Endothelial cell of umbilical vein (primary cell): ENCODE measurements at regions of chr13 and their contacts with region 1.

Region 1: GRCh38 chr13:39051157-39051556 is 12.9 kb downstream of the NHLRC3 start:
- DNase-seq: peak; percentile 57
- H3K4me3 ChIP-seq: no peak overlapping the region
- H3K27ac ChIP-seq: no peak overlapping the region
- H3K4me1 ChIP-seq: no peaks in the 10 kb centered on the region
- H3K27me3 ChIP-seq: no peaks in the 10 kb centered on the region
- CTCF ChIP-seq: peak; percentile 18 to 31
- POLR2A ChIP-seq: no peak

Region 2: GRCh38 chr13:39037880-39038568 is 13.1 kb before region 1 on chr13 and contains the starts of genes NHLRC3 and PROSER1:
- CTCF ChIA-PET with region 1: interaction called, 15 read pairs
- POLR2A ChIA-PET with region 1: no interaction called
- dilution Hi-C with region 1: no loop called
- intact Hi-C with region 1: no loop called
- DNase-seq: peak; percentile 89
- H3K4me3 ChIP-seq: peak within 1 kb of the TSS; percentile 75 to 98 (median 94)
- H3K27ac ChIP-seq: peak within 1 kb of the TSS; percentile 86
- H3K4me1 ChIP-seq: peaks cover 24% of the 10 kb centered on the region
- H3K27me3 ChIP-seq: no peaks in the 10 kb centered on the region
- CTCF ChIP-seq: no peak
- POLR2A ChIP-seq: peak; percentile 45
- total RNA-seq, gene NHLRC3: 10.2 and 11.9 TPM in 2 replicates
- total RNA-seq, gene PROSER1: 40.4 and 44.1 TPM in 2 replicates

Region 3: DNA sequence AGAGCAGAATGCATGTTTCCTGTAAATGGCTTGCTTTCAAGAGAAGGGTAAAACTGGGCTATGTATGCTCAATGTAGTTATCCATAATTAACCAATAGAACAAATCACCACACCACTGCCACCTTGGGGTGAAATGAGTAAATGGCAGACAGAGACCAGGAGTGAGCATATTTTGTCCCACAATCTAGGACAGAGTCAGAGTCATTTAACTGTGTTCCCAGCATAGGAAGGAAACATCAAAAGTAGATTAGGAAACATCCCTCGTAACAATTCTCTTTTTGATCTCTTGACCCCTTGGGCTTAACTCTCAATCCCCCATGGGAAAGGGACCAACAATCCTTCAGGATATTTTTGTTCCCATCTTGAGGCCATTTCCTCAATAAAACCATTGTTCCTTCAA is 211.9 kb after region 1 on chr13:
- CTCF ChIA-PET with region 1: interaction called, 20 read pairs
- POLR2A ChIA-PET with region 1: no interaction called
- dilution Hi-C with region 1: no loop called
- intact Hi-C with region 1: loop called (anchors 1 kb)
- DNase-seq: peak; percentile 71
- H3K4me3 ChIP-seq: no peak overlapping the region
- H3K27ac ChIP-seq: no peak overlapping the region
- H3K4me1 ChIP-seq: no peaks in the 10 kb centered on the region
- H3K27me3 ChIP-seq: peaks cover 2 to 11% of the 10 kb centered on the region in 2 experiments
- CTCF ChIP-seq: peak; percentile 48
- POLR2A ChIP-seq: no peak

Region 4: GRCh38 chr13:39676315-39676876 is 625.2 kb after region 1 on chr13:
- CTCF ChIA-PET with region 1: interaction called, 26 read pairs
- POLR2A ChIA-PET with region 1: no interaction called
- dilution Hi-C with region 1: no loop called
- intact Hi-C with region 1: loop called (anchors 1 kb)
- DNase-seq: peak; percentile 55
- H3K4me3 ChIP-seq: no peak overlapping the region
- H3K27ac ChIP-seq: no peak overlapping the region
- H3K4me1 ChIP-seq: no peaks in the 10 kb centered on the region
- H3K27me3 ChIP-seq: no peaks in the 10 kb centered on the region
- CTCF ChIP-seq: peak in 1 of 2 donors; percentile 26
- POLR2A ChIP-seq: no peak